ENCODE measurements at regions of chr21 and their contacts with region 1.

Region 1: GRCh38 chr21:31180256-31181081 is 142.2 kb upstream of the KRTAP19-8 start:
- DNase-seq: peak in 1 of 5 donors; percentile 34
- H3K4me3 ChIP-seq: peak overlapping the region; percentile 26
- H3K4me3 Mint-ChIP-seq: peak overlapping the region in 5 of 7 donors; percentile 15 to 77 (median 68)
- H3K27ac ChIP-seq: no peak overlapping the region
- H3K27ac Mint-ChIP-seq: peak overlapping the region in 5 of 8 donors; percentile 3 to 94 (median 78)
- H3K4me1 ChIP-seq: peaks cover 73% of the 10 kb centered on the region
- H3K4me1 Mint-ChIP-seq: peaks cover 45 to 66% (median 60%) of the 10 kb centered on the region in 3 donors
- H3K27me3 ChIP-seq: no peaks in the 10 kb centered on the region
- H3K27me3 Mint-ChIP-seq: peaks cover 0 to 8% of the 10 kb centered on the region in 2 donors

Region 2: GRCh38 chr21:31098576-31099005 is 81.9 kb before region 1 on chr21:
- CTCF ChIA-PET with region 1: interaction called, 47 read pairs
- POLR2A ChIA-PET with region 1: no interaction called
- DNase-seq: peak; percentile 34 to 69 (median 60)
- H3K4me3 ChIP-seq: no peak overlapping the region
- H3K4me3 Mint-ChIP-seq: peak overlapping the region in 4 of 7 donors; percentile 19 to 68 (median 42)
- H3K27ac ChIP-seq: no peak overlapping the region
- H3K27ac Mint-ChIP-seq: peak overlapping the region in 2 of 8 donors; percentile 21 to 39
- H3K4me1 ChIP-seq: peaks cover 17% of the 10 kb centered on the region
- H3K4me1 Mint-ChIP-seq: peaks cover 17 to 28% (median 24%) of the 10 kb centered on the region in 3 donors
- H3K27me3 ChIP-seq: no peaks in the 10 kb centered on the region
- H3K27me3 Mint-ChIP-seq: peaks cover 15 to 29% of the 10 kb centered on the region in 2 donors

Measured in CD8-positive, alpha-beta memory T cell (primary cell).